GM12878 (cell line): ENCODE measurements at regions of chr3 and their contacts with region 1.

Region 1: GRCh38 chr3:6717026-6717943 is 143.6 kb upstream of the GRM7 start:
- DNase-seq: peak; percentile 86
- ATAC-seq: peak; percentile 95
- H3K4me3 ChIP-seq: no peak overlapping the region; the same call in none of the 2 replicates
- H3K27ac ChIP-seq: peak overlapping the region; percentile 74; the same call in 1 of the 2 replicates
- H3K4me1 ChIP-seq: peaks cover 7% of the 10 kb centered on the region; the same call in 1 of the 2 replicates
- H3K27me3 ChIP-seq: no peaks in the 10 kb centered on the region
- CTCF ChIP-seq: no peak
- EP300 ChIP-seq: peak; percentile 81 to 96
- POLR2A ChIP-seq: no peak
- RAD21 ChIP-seq: peak; percentile 7; the same call in 1 of the 2 replicates

Region 2: DNA sequence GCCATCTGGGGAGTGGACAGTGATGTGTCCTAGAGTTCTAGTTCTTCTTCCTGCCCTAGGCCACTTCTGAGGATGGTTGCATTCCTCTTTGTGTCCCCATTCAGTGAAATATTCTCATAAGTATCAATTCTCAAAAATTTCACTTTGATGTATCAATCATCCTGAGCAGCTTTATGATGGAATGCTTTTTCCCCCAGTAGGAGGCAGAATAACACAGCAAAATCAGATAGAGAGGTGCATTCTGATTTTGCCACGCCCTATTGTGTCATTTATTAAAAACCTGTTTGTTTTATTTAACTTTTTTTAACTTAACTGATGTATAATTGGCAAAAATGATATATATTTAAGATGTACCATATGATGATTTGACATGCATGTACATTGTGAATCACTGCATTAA is 512.4 kb before region 1 on chr3:
- CTCF ChIA-PET with region 1: no interaction called
- POLR2A ChIA-PET with region 1: no interaction called
- RAD21 ChIA-PET with region 1: no interaction called
- SMC1A ChIA-PET with region 1: interaction called, 10 read pairs
- in situ Hi-C with region 1: no loop called
- intact Hi-C with region 1: no loop called
- DNase-seq: no peak
- ATAC-seq: peak; percentile 46; the same call in 1 of the 3 replicates
- H3K4me3 ChIP-seq: no peak overlapping the region
- H3K27ac ChIP-seq: no peak overlapping the region
- H3K4me1 ChIP-seq: no peaks in the 10 kb centered on the region
- H3K27me3 ChIP-seq: no peaks in the 10 kb centered on the region
- CTCF ChIP-seq: peak; percentile 18 to 32 (median 25); a peak in 3 of 6 replicates
- EP300 ChIP-seq: no peak
- POLR2A ChIP-seq: no peak
- RAD21 ChIP-seq: peak; percentile 61

Region 3: DNA sequence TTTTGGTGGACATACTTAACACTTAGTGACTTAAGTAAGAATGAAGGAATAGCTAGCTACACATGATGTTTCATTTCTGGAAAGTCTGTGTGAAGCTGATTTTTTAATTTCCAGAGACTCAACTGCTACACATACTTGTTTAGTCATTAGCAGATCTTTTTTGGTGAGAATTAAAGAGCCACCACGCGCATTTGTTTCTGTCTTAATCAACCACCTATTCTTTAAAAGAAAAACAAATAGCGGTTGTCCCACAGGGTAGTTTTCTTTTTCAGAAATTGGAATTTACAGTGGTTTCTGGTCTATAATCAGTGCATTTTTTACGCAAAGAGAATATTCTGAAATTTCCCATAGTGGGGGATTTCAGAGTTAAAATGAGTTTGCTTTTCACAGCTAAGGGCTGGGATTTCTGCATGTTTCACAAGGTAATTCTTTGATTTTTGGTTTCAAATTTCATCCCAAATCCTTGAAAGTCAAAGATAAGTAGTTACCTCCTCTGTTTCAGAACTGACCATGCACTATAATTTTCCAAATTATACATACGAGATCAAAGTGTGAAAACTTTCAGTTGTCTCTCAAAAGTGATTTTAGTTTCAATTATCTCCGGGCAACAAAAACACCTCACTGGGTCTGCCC is 487.4 kb before region 1 on chr3:
- CTCF ChIA-PET with region 1: no interaction called
- POLR2A ChIA-PET with region 1: no interaction called
- RAD21 ChIA-PET with region 1: interaction called, 3 read pairs
- SMC1A ChIA-PET with region 1: interaction called, 5 read pairs
- in situ Hi-C with region 1: no loop called
- intact Hi-C with region 1: loop called (anchors 1 kb)
- DNase-seq: peak; percentile 70
- ATAC-seq: peak; percentile 83
- H3K4me3 ChIP-seq: no peak overlapping the region
- H3K27ac ChIP-seq: peak overlapping the region; percentile 68
- H3K4me1 ChIP-seq: peaks cover 3% of the 10 kb centered on the region; the same call in 1 of the 2 replicates
- H3K27me3 ChIP-seq: no peaks in the 10 kb centered on the region
- CTCF ChIP-seq: no peak
- EP300 ChIP-seq: peak in 1 of 2 experiments; percentile 70; a peak in 1 of 4 replicates
- POLR2A ChIP-seq: no peak
- RAD21 ChIP-seq: no peak

Region 4: DNA sequence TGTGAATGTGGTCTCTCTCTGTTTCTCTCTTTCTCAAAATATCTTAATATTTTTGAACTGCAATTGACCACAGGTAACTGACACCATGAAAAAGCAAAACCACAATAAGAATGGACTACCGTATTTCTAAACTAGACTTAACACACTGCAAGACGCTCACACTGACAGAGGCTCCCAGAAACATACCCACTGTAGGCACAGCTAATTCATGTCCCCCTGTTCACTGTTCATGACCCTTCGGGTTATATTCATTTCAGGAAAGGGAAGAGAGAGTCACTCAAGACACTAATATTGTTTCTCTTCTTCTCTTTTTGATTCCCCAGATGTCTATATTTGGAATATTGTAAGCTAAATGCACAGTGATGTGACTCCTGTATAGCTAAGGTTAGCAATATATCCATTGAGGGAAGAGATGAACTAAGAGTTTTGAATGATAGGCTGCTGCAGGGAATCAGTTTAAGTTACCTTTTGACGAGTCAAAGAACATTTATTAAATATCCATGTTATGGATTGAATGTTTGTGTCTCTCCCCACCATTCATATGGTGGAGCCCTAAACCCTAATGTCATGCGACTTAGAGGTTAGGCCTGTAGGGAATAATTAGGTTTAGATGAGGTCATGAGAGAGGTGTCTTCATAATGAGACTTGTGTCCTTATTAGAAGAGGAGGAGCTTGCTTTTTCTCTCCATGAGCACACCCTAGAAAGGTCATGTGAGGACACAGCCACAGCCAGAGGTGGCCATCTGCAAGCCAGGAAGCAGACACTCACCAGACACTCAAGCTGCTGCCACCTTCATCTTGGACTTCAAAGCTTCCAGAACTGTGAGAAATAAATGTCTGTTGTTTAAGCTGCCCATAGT is 73.0 kb before region 1 on chr3:
- CTCF ChIA-PET with region 1: interaction called, 4 read pairs
- POLR2A ChIA-PET with region 1: interaction called, 8 read pairs
- RAD21 ChIA-PET with region 1: interaction called, 53 read pairs
- SMC1A ChIA-PET with region 1: interaction called, 17 read pairs
- in situ Hi-C with region 1: no loop called
- intact Hi-C with region 1: loop called (anchors 2 kb)
- DNase-seq: peak; percentile 25
- ATAC-seq: peak; percentile 87
- H3K4me3 ChIP-seq: no peak overlapping the region
- H3K27ac ChIP-seq: no peak overlapping the region
- H3K4me1 ChIP-seq: no peaks in the 10 kb centered on the region
- H3K27me3 ChIP-seq: no peaks in the 10 kb centered on the region
- CTCF ChIP-seq: no peak
- EP300 ChIP-seq: no peak
- POLR2A ChIP-seq: no peak
- RAD21 ChIP-seq: 0 out of 2 replicates have a peak, but pooled peaks have one; percentile 3

Region 5: DNA sequence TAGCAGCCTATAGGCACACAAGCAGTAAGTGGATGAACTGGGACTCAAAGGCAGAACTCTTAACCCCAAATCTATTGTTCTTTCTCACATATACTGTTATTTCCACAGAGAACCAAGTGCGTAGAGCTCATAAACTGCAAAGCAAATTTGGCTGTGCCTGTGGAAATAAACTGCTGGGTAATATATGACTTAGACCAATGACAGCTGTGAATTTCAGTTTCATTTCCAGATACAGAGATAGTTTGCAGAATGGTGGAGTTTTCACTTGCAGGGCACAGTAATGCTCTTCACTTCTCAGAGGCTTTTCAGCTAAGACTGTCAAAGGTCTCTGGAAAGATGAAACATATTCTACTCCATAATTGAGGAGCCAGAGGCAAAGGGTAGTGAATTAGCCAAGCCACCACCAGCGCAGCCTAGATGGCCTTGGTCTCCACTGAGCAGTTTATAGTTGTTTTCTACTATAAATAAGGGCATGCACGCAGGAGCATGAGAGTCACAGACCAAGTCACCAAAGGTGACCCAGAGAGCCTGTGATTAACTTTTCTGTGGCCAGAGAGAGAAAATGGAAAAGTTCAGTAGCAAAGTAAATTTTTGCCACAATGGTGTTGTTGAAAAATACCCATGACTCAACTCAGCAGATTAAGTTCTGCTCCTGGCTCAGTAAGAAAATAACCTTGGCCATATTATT is 37.0 kb before region 1 on chr3:
- CTCF ChIA-PET with region 1: interaction called, 17 read pairs
- POLR2A ChIA-PET with region 1: interaction called, 11 read pairs
- RAD21 ChIA-PET with region 1: interaction called, 43 read pairs
- SMC1A ChIA-PET with region 1: interaction called, 31 read pairs
- in situ Hi-C with region 1: no loop called
- intact Hi-C with region 1: loop called (anchors 1 kb)
- DNase-seq: peak; percentile 51
- ATAC-seq: peak; percentile 93
- H3K4me3 ChIP-seq: no peak overlapping the region
- H3K27ac ChIP-seq: peak overlapping the region; percentile 76
- H3K4me1 ChIP-seq: peaks cover 5% of the 10 kb centered on the region; the same call in 1 of the 2 replicates
- H3K27me3 ChIP-seq: no peaks in the 10 kb centered on the region
- CTCF ChIP-seq: no peak
- EP300 ChIP-seq: peak; percentile 12 to 39; a peak in 2 of 4 replicates
- POLR2A ChIP-seq: no peak
- RAD21 ChIP-seq: 0 out of 2 replicates have a peak, but pooled peaks have one; percentile 17

Region 6: GRCh38 chr3:6706777-6707176 is 10.5 kb before region 1 on chr3:
- CTCF ChIA-PET with region 1: no interaction called
- POLR2A ChIA-PET with region 1: no interaction called
- RAD21 ChIA-PET with region 1: interaction called, 9 read pairs
- SMC1A ChIA-PET with region 1: interaction called, 12 read pairs
- in situ Hi-C with region 1: no loop called
- intact Hi-C with region 1: no loop called
- DNase-seq: no peak
- ATAC-seq: no peak
- H3K4me3 ChIP-seq: no peak overlapping the region
- H3K27ac ChIP-seq: no peak overlapping the region
- H3K4me1 ChIP-seq: no peaks in the 10 kb centered on the region
- H3K27me3 ChIP-seq: no peaks in the 10 kb centered on the region
- CTCF ChIP-seq: no peak
- EP300 ChIP-seq: no peak
- POLR2A ChIP-seq: no peak
- RAD21 ChIP-seq: no peak